Ovary (tissue), 10 donors: ENCODE measurements at regions of chr17 and their contacts with region 1.

Region 1: GRCh38 chr17:59331129-59331928 is at the start of gene YPEL2:
- DNase-seq: peak; percentile 95 to 98 (median 97)
- H3K4me3 ChIP-seq: peak within 1 kb of the TSS; percentile 96
- H3K27ac ChIP-seq: peak within 1 kb of the TSS; percentile 75 to 85
- H3K4me1 ChIP-seq: peaks cover 7% of the 10 kb centered on the region
- H3K27me3 ChIP-seq: no peaks in the 10 kb centered on the region
- CTCF ChIP-seq: no peak
- EP300 ChIP-seq: no peak
- POLR2A ChIP-seq: peak; percentile 39
- total RNA-seq, gene YPEL2: 6.6 to 28.1 (median 10.6) TPM

Region 2: DNA sequence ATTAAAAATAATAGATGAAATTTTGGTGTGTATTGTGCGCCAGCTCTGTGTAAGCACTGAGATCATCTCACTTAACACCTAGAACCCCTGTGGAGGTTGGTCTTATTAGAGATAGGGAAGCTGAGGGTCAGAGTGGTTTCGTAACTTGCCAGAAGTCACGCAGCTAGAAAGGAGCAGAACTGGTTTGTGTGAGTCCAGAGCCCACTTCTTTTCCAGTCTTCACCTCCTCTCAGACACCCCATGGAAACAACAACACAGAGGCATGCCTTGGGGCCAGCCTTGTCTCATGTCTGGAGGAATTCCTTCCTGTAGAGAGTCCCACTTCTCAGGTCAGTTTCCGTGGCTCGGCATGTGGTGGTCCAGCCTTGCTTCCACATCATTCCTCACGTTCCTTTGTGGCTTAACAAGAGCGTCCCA is 16.7 kb after region 1 on chr17:
- intact Hi-C with region 1: no loop called
- DNase-seq: no peak
- H3K4me3 ChIP-seq: no peak overlapping the region
- H3K27ac ChIP-seq: no peak overlapping the region
- H3K4me1 ChIP-seq: peaks cover 2% of the 10 kb centered on the region
- H3K27me3 ChIP-seq: no peaks in the 10 kb centered on the region
- CTCF ChIP-seq: no peak
- EP300 ChIP-seq: no peak
- POLR2A ChIP-seq: no peak

Region 3: DNA sequence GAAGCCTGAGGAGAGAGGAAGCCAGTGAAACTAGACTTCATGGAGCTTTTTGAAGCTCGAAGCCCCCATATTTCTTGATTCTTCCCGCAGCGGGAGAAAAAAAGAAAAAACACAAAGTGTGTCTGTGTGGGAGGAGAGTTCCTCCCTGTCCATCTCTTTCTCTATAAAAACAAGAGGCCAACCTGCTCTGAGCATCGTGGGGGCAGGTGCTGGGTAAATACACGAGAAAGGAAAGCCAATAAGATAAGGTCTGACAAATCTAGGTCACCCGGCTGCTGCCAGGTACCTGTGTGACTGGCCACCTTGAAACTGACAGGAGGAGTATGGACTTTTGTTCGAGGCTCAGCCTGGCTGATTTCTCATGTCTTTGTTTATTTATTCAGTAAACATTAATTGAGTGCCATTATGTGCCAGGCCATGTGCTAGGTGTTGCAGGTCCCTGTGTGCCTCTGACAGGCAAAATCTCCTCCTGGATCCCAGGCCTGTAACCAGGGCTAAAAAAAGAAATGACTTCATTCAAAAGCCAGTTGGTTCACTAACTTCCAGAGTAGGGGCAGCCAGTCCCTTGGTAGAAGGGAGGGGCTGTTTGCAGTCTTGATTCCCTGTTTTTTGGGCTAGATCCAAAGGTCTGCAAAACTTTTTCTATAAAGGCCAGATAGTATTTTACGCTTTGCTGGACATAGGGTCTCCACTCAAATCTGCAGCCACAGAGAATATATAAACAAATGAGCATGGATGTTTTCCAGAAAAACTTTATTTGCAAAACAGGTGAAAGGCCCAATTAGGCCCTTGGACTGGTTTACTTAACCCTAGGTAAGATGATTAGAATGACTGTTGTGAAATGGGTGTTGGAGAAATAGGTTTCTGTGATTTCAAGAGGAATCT is 35.7 kb after region 1 on chr17:
- intact Hi-C with region 1: loop called in 1 of 4 experiments (anchors 5 kb)
- DNase-seq: peak; percentile 38 to 51 (median 47)
- H3K4me3 ChIP-seq: no peak overlapping the region
- H3K27ac ChIP-seq: peak overlapping the region; percentile 67 to 68
- H3K4me1 ChIP-seq: peaks cover 41% of the 10 kb centered on the region
- H3K27me3 ChIP-seq: no peaks in the 10 kb centered on the region
- CTCF ChIP-seq: no peak
- EP300 ChIP-seq: no peak
- POLR2A ChIP-seq: no peak

Region 4: GRCh38 chr17:59427425-59427921 is 96.1 kb after region 1 on chr17:
- intact Hi-C with region 1: loop called in 2 of 4 experiments (anchors 5 kb)
- DNase-seq: no peak
- H3K4me3 ChIP-seq: no peak overlapping the region
- H3K27ac ChIP-seq: peak overlapping the region in 1 of 2 donors; percentile 67
- H3K4me1 ChIP-seq: peaks cover 13% of the 10 kb centered on the region
- H3K27me3 ChIP-seq: no peaks in the 10 kb centered on the region
- CTCF ChIP-seq: no peak
- EP300 ChIP-seq: no peak
- POLR2A ChIP-seq: no peak

Region 5: DNA sequence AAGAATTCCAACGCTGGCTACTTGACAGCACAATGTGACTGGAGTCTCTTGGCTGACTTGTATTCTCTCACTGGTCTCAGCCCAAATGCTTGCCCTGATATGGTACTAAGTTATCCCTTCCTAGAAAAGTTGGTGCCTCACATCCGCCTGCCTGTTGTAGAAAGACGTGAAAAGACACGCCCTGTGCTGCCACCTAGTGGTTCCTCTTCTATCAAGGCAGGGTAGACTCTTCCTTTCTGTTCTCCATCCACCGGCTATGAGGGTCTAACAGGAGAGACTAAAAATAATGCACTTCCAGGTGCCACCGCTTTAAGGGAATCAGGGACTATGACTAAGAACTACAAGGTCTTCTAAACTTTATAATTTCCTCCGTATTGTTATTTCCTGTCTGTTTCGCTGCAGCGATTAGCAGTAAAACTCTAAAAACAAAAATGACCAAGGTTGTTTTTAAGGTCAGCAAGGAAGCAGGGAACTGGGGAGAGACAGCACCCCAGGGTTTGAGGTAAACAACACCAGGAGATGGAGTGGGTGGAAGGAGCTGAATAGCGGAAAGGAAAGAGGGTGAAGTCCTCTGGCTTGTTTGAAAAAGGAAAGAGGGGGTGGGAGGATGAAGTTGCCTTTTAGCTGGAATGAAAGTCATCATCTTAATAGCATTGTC is 109.6 kb after region 1 on chr17:
- intact Hi-C with region 1: loop called in 3 of 4 experiments (anchors 2 to 5 kb)
- DNase-seq: peak; percentile 84 to 94 (median 89)
- H3K4me3 ChIP-seq: no peak overlapping the region
- H3K27ac ChIP-seq: no peak overlapping the region
- H3K4me1 ChIP-seq: peaks cover 3% of the 10 kb centered on the region
- H3K27me3 ChIP-seq: no peaks in the 10 kb centered on the region
- CTCF ChIP-seq: peak; percentile 77 to 83 (median 83)
- EP300 ChIP-seq: no peak
- POLR2A ChIP-seq: no peak